Activated T-helper 1 cell treated with anti-CD3 and anti-CD28 coated beads, Interleukin-12 subunit alpha, Interleukin-12 subunit beta, Interleukin-2, Interleukin-4 antibody, amounts not matched to agents 30 ng/mL and 10 ng/mL and 1 ng/mL, durations not matched to agents 14 hours and 24 hours and 36 hours (primary cell): ENCODE measurements at regions of chr2 and their contacts with region 1.

Region 1: GRCh38 chr2:38665854-38666555 is at the start of gene GALM:
- DNase-seq: peak; percentile 54
- H3K4me3 Mint-ChIP-seq: peak within 1 kb of the TSS; percentile 93
- H3K27ac Mint-ChIP-seq: peak within 1 kb of the TSS; percentile 94
- H3K4me1 Mint-ChIP-seq: peaks cover 69% of the 10 kb centered on the region
- H3K27me3 Mint-ChIP-seq: no peaks in the 10 kb centered on the region
- total RNA-seq, gene GALM: 77.0 and 78.4 TPM in 2 replicates

Region 2: GRCh38 chr2:38581193-38582147 is 84.5 kb before region 1 on chr2:
- intact Hi-C with region 1: loop called (anchors 1 kb)
- DNase-seq: peak; percentile 9
- H3K4me3 Mint-ChIP-seq: no peak overlapping the region
- H3K27ac Mint-ChIP-seq: peak overlapping the region; percentile 75
- H3K4me1 Mint-ChIP-seq: peaks cover 28% of the 10 kb centered on the region
- H3K27me3 Mint-ChIP-seq: no peaks in the 10 kb centered on the region

Region 3: DNA sequence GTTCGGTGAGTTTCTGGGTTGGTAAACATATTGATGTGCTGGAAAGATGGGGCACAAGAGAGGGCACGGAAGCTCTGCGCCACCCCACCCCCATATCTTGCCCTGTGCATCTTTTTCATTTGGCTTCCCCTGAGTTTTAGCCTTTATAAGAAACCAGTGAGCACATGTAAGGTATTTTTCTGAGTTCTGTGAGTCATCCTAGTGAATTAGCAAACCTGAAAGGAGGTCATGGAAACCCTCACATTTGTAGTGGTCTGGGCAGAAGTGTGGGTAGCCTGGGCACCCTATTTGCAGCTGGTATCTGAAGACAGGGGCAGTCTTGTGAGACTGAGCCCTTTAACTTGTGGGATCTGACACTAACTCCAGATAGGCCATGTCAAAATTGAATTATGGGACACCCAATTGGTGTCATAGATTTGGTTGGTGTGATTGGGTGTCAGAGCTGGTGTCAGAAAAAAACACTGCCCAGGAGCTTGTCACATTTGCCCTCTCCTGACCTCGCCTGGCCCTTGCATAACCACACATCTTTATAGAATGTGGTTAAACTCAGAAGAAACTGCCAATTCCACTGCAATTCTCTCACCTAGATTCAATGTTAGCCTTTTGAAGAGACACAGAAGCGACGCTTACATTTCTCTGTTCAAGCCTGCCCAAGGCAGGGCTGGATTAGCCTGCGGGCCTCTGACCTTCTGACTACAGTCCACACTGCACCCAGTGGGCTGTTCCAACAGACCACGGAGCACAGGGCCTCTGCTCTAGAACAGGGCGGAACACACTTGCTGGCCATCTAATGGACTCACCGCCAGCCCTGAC is 12.1 kb before region 1 on chr2:
- intact Hi-C with region 1: loop called (anchors 1 kb)
- DNase-seq: peak; percentile 30
- H3K4me3 Mint-ChIP-seq: peak overlapping the region; percentile 68
- H3K27ac Mint-ChIP-seq: peak overlapping the region; percentile 90
- H3K4me1 Mint-ChIP-seq: peaks cover 80% of the 10 kb centered on the region
- H3K27me3 Mint-ChIP-seq: no peaks in the 10 kb centered on the region

Region 4: GRCh38 chr2:38690499-38691294 is 24.7 kb after region 1 on chr2:
- intact Hi-C with region 1: loop called (anchors 1 kb)
- DNase-seq: no peak
- H3K4me3 Mint-ChIP-seq: no peak overlapping the region
- H3K27ac Mint-ChIP-seq: peak overlapping the region; percentile 89
- H3K4me1 Mint-ChIP-seq: peaks cover 49% of the 10 kb centered on the region
- H3K27me3 Mint-ChIP-seq: no peaks in the 10 kb centered on the region

Region 5: DNA sequence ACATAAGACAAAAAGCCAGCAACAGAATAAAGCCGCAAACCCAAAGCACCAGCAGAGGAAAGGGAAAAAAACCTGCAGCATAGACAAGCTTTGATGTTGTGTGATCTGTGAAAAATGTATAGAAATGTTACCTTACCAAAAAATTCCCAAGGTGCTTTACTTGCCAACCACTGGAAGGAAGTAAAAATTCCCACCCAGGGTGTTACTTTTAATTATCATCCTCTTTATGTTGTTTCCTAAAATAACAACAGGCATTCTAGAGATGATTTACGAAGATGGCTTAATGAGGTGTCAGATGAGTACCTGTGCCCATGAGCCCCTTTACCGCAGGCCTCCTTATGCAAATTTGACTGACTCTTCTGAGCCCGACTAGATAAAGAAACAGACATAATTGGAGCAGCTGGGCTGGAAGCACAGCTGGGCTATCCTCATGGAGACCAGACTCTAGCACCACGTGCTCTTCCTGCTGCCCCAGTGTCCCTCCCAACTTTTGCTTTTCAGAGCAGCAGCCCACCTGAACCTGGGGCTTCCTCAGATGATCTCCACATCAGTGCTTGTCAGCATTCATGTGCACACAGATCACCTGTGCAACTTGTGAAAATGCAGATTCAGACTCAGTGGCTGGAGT is 43.7 kb after region 1 on chr2:
- intact Hi-C with region 1: loop called (anchors 2 kb)
- DNase-seq: peak; percentile 29
- H3K4me3 Mint-ChIP-seq: peak overlapping the region; percentile 66
- H3K27ac Mint-ChIP-seq: peak overlapping the region; percentile 95
- H3K4me1 Mint-ChIP-seq: peaks cover 77% of the 10 kb centered on the region
- H3K27me3 Mint-ChIP-seq: no peaks in the 10 kb centered on the region